OCI-LY7 (cell line): ENCODE measurements at regions of chr2 and their contacts with region 1.

Region 1: GRCh38 chr2:27291865-27292264 is 9.6 kb downstream of the TRIM54 start:
- DNase-seq: peak; percentile 85
- H3K4me3 ChIP-seq: peak overlapping the region; percentile 39
- H3K27ac ChIP-seq: peak overlapping the region; percentile 99
- H3K4me1 ChIP-seq: peaks cover 75% of the 10 kb centered on the region
- CTCF ChIP-seq: peak; percentile 90

Region 2: DNA sequence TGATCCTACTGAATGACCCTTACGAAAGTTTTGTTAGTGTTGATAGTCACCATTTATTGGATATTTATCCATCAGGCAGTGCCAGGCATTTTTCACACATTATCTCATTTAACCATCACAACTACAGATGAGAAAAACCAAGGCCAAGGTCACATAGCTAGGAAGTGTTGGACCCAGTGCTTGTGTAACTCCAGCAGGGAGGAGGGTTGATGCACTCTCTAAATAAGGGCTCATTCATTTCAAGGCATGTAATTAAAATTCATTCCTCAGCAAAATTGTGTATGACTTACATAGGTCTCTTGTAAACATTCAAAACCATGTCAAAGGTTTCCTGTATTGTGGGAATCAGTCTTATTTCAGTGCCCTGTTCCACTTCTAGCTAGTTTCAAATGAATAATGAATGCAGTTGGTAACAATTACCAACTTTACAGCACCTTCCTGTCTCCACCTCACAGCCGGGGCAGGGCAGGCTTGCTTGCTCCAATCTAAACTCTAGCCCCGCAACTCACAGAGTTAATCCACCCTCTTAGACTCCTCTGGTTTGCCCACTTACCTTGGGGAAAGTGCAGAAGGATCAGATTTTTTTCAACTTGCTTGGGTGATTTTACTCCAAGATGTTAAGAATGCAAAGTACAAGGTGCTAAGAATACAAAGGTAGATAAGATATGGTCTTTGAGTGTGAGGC is 327.3 kb before region 1 on chr2:
- CTCF ChIA-PET with region 1: interaction called, 6 read pairs
- POLR2A ChIA-PET with region 1: no interaction called
- intact Hi-C with region 1: loop called (anchors 5 kb)
- DNase-seq: no peak
- H3K4me3 ChIP-seq: no peak overlapping the region
- H3K27ac ChIP-seq: no peak overlapping the region
- H3K4me1 ChIP-seq: no peaks in the 10 kb centered on the region
- CTCF ChIP-seq: no peak

Region 3: GRCh38 chr2:27191053-27191829 is 100.6 kb before region 1 on chr2:
- CTCF ChIA-PET with region 1: interaction called, 3 read pairs
- POLR2A ChIA-PET with region 1: interaction called, 5 read pairs
- intact Hi-C with region 1: loop called (anchors 5 kb)
- DNase-seq: peak; percentile 89
- H3K4me3 ChIP-seq: no peak overlapping the region
- H3K27ac ChIP-seq: peak overlapping the region; percentile 32
- H3K4me1 ChIP-seq: peaks cover 56% of the 10 kb centered on the region
- CTCF ChIP-seq: peak; percentile 97

Region 4: GRCh38 chr2:27264753-27265535 is 26.9 kb before region 1 on chr2:
- CTCF ChIA-PET with region 1: interaction called, 7 read pairs
- POLR2A ChIA-PET with region 1: interaction called, 3 read pairs
- intact Hi-C with region 1: loop called (anchors 2 kb)
- DNase-seq: peak; percentile 71
- H3K4me3 ChIP-seq: peak overlapping the region; percentile 90
- H3K27ac ChIP-seq: peak overlapping the region; percentile 23
- H3K4me1 ChIP-seq: peaks cover 54% of the 10 kb centered on the region
- CTCF ChIP-seq: peak; percentile 79